ENCODE measurements at regions of chr5 and their contacts with region 1.

Region 1: DNA sequence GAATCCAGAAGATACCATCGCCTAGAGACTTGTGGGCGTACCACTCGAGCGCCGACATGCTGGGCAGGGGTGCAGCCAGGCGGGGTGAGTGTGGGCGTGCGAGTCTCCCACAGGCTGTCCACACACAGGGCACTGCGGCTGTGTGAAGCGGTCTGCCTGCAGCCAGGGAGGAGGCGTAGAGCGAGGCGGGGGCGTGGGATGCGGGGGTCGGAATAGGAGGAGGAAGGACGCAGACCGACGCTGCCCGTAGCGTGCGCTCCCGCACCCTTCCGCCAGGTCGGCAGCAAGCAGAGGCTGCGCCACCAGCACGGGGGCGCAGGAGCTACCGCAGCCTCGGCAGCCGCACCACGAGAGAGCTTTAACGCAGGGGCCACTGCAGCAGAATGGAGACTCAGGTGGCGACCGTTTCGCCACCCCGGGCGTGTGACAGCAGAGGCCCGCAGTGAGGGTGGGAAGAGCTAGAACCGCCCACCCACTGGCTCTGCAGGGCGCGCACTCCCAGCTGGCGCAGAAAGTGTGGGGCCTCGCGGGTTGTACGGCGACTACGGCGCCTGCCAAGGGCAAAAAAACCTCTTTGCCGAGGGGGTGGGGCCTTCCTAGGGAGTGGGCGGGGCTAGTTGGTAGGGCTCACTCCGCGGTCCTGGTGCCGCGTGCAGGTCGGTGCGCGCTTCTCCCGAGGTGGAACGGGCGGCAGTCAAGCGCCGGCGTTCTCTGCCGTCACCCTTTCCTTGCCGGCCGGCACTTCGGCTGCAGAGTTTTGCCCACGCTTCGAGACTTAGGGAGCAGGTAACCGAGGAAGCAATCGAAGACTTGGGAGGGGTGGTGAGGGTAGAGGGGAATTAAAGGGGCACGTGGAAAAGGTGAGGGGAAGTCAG is at the starts of genes MBLAC2 and POLR3G:
- DNase-seq: peak; percentile 72 to 82 (median 80)
- H3K4me3 ChIP-seq: peak within 1 kb of the TSS; percentile 74 to 90 (median 79)
- H3K4me3 Mint-ChIP-seq: peak within 1 kb of the TSS; percentile 95 to 97
- H3K27ac ChIP-seq: peak within 1 kb of the TSS; percentile 58 to 74
- H3K27ac Mint-ChIP-seq: peak within 1 kb of the TSS; percentile 80 to 92 (median 88)
- H3K4me1 ChIP-seq: peaks cover 19 to 22% of the 10 kb centered on the region in 2 donors
- H3K4me1 Mint-ChIP-seq: peaks cover 22% of the 10 kb centered on the region
- H3K27me3 ChIP-seq: no peaks in the 10 kb centered on the region
- H3K27me3 Mint-ChIP-seq: peaks cover 3 to 7% (median 3%) of the 10 kb centered on the region in 3 donors
- CTCF ChIP-seq: peak; percentile 55
- polyA plus RNA-seq, gene MBLAC2: 0.96 to 1.5 (median 1.2) TPM
- polyA plus RNA-seq, gene POLR3G: 0.07 to 0.36 (median 0.13) TPM

Region 2: DNA sequence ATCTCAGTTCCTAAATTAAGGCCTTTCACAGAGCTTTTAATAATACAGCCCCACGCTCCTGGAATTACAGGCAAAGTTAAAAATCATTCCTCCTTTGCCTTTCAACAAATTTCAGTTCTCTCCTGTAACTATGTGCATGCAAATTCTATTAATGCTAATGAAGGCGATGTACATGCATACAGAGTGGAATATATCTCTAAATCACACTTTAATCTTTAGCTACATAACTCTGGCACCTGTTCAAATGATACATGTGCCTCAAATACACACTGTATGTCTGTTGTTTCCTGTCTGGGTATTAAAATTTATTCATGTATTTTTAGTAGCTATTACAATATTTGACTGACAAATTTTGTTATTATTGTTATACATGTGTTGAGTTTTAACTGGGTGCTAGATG is 95.7 kb before region 1 on chr5:
- intact Hi-C with region 1: no loop called
- DNase-seq: no peak
- H3K4me3 ChIP-seq: no peak overlapping the region
- H3K4me3 Mint-ChIP-seq: no peak overlapping the region
- H3K27ac ChIP-seq: no peak overlapping the region
- H3K27ac Mint-ChIP-seq: no peak overlapping the region
- H3K4me1 ChIP-seq: no peaks in the 10 kb centered on the region
- H3K4me1 Mint-ChIP-seq: no peaks in the 10 kb centered on the region
- H3K27me3 ChIP-seq: no peaks in the 10 kb centered on the region
- H3K27me3 Mint-ChIP-seq: peaks cover 0 to 2% (median 0%) of the 10 kb centered on the region in 3 donors
- CTCF ChIP-seq: no peak

Region 3: DNA sequence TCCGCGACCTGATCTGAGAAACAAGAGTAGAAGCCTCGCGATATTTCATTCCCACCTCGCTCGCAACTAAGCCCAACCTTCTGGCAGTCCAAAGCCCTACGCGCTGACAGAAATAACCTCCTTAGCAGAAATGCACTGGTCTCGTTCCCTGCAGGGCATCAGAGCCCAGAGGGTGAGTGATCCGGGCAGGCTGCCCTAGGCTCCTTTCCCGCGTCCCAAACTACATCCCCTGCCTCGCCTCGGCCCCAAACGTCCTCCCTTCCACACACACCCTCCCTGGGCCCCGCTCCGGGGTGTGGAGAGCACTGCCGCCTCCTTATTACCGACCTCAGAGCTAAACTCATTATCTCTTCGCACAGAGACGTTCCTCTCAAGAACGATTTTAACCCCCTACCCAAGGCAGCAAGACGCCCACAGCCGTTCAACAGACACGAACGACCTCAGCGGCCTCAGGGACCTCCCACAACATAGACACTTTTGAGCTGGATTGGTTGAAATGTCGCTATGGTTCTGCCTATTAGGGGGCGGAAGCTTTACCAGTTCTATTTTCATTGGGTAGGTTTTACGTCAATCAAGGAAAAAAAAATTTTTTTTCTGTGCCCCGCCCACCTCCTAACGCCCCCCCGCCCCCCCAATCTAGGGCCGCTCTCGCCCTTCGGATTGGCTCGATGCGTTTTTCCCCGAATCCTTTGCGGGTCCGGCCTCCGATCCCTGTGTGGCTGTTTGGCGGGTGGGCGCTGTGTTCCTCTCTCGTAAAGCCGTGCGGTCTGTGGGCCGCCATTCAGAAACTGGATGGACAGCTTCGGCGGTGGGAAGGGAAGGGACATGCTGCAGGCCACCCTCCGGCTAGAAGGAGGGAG is 64.9 kb before region 1 on chr5 and contains the start of gene CETN3:
- intact Hi-C with region 1: loop called in 1 of 2 experiments (anchors 5 kb)
- DNase-seq: peak; percentile 92 to 96 (median 93)
- H3K4me3 ChIP-seq: peak within 1 kb of the TSS; percentile 84 to 100 (median 94)
- H3K4me3 Mint-ChIP-seq: no peak within 1 kb of the TSS
- H3K27ac ChIP-seq: peak within 1 kb of the TSS; percentile 83 to 96
- H3K27ac Mint-ChIP-seq: no peak within 1 kb of the TSS
- H3K4me1 ChIP-seq: peaks cover 13 to 19% of the 10 kb centered on the region in 2 donors
- H3K4me1 Mint-ChIP-seq: peaks cover 3% of the 10 kb centered on the region
- H3K27me3 ChIP-seq: no peaks in the 10 kb centered on the region
- H3K27me3 Mint-ChIP-seq: peaks cover 0 to 6% (median 0%) of the 10 kb centered on the region in 3 donors
- CTCF ChIP-seq: no peak
- polyA plus RNA-seq, gene CETN3: 0.59 to 9.0 (median 7.7) TPM

Region 4: DNA sequence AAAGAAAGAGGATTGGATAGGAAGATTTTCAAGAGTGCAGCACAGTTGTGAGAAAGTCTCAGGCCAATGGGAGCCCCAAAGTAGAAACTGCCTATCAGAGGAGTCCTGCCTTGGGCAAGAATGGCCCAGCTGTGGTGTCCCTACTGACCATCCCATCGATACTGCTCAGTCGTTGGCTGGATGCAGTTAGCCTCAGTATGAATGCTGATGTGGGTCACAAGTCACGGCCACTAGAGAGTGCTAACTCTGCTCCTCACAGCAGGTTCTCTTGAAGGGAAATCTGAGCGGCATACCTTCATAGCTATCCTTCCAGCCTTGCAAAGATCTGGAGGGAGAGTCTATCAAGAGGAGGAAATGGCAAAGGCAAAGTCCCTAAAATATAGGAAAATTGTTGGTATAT is 53.3 kb before region 1 on chr5:
- intact Hi-C with region 1: loop called in 1 of 2 experiments (anchors 10 kb)
- DNase-seq: no peak
- H3K4me3 ChIP-seq: no peak overlapping the region
- H3K4me3 Mint-ChIP-seq: no peak overlapping the region
- H3K27ac ChIP-seq: no peak overlapping the region
- H3K27ac Mint-ChIP-seq: no peak overlapping the region
- H3K4me1 ChIP-seq: no peaks in the 10 kb centered on the region
- H3K4me1 Mint-ChIP-seq: no peaks in the 10 kb centered on the region
- H3K27me3 ChIP-seq: no peaks in the 10 kb centered on the region
- H3K27me3 Mint-ChIP-seq: peaks cover 2 to 4% (median 2%) of the 10 kb centered on the region in 3 donors
- CTCF ChIP-seq: no peak

Region 5: DNA sequence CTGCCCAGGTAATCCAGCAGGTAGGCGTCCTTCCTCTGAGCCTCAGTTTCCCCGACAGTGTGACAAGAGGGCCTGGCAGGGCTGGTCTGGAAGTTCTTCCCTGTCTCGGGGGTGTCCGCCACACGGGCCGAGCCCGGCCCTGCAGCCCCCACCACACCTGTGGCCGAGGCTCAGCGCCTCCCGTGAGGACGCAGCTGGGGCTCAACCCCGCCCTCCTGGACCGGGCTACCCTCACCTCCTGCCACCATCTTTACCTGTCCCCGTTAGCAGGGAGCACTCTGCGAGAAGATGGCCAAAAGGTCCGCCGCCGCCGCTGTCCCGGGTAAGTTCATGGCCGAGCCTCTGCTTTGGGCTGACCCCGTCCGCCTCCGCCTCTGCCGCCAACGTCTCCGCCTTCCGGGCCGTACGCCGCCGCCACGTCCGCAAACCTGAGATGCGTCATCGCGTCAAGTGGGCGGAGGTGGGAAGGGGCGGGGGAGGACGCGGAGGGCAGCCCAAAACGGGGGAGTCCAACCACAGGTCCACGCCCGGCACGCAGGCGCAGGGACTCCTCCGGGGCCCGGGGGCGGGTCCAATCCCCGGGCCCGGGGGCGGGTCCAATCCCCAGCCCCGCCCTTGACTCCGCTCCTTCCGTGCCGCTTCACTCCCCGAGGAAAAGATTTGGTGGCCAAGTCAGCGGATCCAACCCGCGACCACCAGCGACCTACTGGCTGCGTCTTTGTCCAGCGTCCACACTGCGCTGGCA is 54.9 kb after region 1 on chr5 and contains the start of gene LYSMD3:
- intact Hi-C with region 1: loop called (anchors 2 to 5 kb)
- DNase-seq: peak; percentile 95 to 98 (median 98)
- H3K4me3 ChIP-seq: peak within 1 kb of the TSS; percentile 75 to 97 (median 89)
- H3K4me3 Mint-ChIP-seq: peak within 1 kb of the TSS; percentile 98 to 99
- H3K27ac ChIP-seq: peak within 1 kb of the TSS; percentile 80 to 96
- H3K27ac Mint-ChIP-seq: peak within 1 kb of the TSS; percentile 92 to 99 (median 98)
- H3K4me1 ChIP-seq: peaks cover 15 to 34% of the 10 kb centered on the region in 2 donors
- H3K4me1 Mint-ChIP-seq: peaks cover 26% of the 10 kb centered on the region
- H3K27me3 ChIP-seq: no peaks in the 10 kb centered on the region
- H3K27me3 Mint-ChIP-seq: peaks cover 0 to 3% (median 2%) of the 10 kb centered on the region in 3 donors
- CTCF ChIP-seq: no peak
- polyA plus RNA-seq, gene LYSMD3: 6.0 to 12.1 (median 8.4) TPM

Measured in CD14-positive monocyte (primary cell).